ENCODE measurements at regions of chr12 and their contacts with region 1.

Region 1: DNA sequence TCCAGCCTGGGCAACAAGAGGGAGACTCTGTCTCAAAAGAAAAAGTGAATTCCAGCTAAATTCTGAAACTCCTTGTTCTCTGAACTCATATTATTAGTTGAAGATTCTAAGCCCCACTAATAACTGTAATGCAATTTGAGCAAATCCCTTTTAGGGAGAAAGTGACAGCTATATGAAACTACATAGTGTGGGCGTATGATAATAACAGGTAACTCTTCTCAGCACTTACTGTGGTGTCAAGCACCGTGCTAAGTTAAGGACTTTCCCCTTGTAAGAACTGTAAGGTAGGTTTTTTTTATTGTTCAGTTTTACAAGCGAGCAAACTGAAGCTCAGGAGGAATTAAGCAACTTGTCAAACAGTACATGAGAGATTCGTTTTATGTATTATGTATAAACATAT is 5.4 kb downstream of the ANKRD13A start:
- DNase-seq: no peak
- H3K4me3 Mint-ChIP-seq: no peak overlapping the region
- H3K27ac Mint-ChIP-seq: peak overlapping the region; percentile 38
- H3K4me1 Mint-ChIP-seq: peaks cover 78% of the 10 kb centered on the region
- H3K27me3 Mint-ChIP-seq: no peaks in the 10 kb centered on the region

Region 2: DNA sequence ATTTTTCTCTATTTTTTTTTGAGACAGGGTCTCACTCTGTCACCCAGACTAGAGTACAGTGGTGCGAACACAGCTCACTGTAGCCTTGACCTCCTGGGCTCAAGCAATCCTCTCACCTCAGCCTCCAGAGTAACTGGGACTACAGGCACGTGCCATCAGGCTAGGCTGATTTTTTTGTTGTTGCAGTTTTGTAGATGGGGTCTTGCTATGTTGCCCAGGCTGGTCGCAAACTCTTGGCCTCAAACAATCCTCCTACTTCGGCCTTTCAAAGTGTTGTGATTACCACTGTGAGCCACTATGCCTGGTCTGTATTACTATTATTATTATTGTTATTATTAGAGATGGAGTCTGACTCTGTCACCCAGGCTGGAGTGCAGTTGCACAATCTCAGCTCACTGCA is 31.8 kb before region 1 on chr12:
- CTCF ChIA-PET with region 1: no interaction called
- POLR2A ChIA-PET with region 1: interaction called, 3 read pairs
- intact Hi-C with region 1: loop called (anchors 5 kb)
- DNase-seq: no peak
- H3K4me3 Mint-ChIP-seq: no peak overlapping the region
- H3K27ac Mint-ChIP-seq: no peak overlapping the region
- H3K4me1 Mint-ChIP-seq: peaks cover 27% of the 10 kb centered on the region
- H3K27me3 Mint-ChIP-seq: no peaks in the 10 kb centered on the region

Region 3: DNA sequence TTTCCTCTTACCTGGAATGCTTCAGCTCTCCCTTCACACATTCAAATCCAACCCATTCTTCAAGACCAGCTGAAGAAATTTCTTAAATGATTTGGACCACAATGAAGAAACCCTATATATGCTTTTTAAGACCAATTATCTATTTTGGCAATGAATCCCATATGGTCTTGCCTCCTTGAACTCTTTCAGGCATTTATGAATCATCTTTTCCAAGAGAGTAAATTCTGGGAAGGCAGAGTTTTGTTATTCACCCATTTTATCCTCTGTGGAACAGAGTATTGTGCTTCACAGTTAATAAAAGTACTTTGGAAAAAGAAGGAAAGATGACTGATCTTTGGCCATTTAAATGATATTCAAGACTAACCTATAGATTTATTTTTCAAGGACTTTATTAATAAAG is 22.4 kb before region 1 on chr12:
- CTCF ChIA-PET with region 1: interaction called, 6 read pairs
- POLR2A ChIA-PET with region 1: interaction called, 3 read pairs
- intact Hi-C with region 1: loop called (anchors 1 kb)
- DNase-seq: no peak
- H3K4me3 Mint-ChIP-seq: no peak overlapping the region
- H3K27ac Mint-ChIP-seq: peak overlapping the region; percentile 78
- H3K4me1 Mint-ChIP-seq: peaks cover 60% of the 10 kb centered on the region
- H3K27me3 Mint-ChIP-seq: no peaks in the 10 kb centered on the region

Region 4: DNA sequence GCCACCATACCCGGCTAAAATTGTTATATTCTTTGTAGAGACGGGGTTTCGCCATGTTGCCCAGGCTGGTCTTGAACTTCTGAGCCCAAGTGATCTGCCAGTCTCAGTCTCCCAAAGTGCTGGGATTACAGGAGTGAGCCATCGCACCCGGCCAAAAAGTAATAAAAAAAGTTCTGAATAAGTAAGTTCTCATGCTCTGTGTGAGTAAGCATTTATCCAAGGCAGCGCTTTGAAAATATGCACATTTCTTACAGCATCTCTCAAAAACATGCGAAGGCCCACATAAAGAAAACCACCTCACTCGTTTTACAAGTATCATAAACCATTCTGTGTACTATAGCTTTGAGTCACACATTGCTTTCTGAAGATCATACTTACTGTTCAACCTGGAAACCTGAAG is 17.0 kb before region 1 on chr12:
- CTCF ChIA-PET with region 1: interaction called, 6 read pairs
- POLR2A ChIA-PET with region 1: interaction called, 3 read pairs
- intact Hi-C with region 1: loop called (anchors 1 kb)
- DNase-seq: peak; percentile 65
- H3K4me3 Mint-ChIP-seq: peak overlapping the region; percentile 20
- H3K27ac Mint-ChIP-seq: peak overlapping the region; percentile 88
- H3K4me1 Mint-ChIP-seq: peaks cover 60% of the 10 kb centered on the region
- H3K27me3 Mint-ChIP-seq: no peaks in the 10 kb centered on the region

Region 5: DNA sequence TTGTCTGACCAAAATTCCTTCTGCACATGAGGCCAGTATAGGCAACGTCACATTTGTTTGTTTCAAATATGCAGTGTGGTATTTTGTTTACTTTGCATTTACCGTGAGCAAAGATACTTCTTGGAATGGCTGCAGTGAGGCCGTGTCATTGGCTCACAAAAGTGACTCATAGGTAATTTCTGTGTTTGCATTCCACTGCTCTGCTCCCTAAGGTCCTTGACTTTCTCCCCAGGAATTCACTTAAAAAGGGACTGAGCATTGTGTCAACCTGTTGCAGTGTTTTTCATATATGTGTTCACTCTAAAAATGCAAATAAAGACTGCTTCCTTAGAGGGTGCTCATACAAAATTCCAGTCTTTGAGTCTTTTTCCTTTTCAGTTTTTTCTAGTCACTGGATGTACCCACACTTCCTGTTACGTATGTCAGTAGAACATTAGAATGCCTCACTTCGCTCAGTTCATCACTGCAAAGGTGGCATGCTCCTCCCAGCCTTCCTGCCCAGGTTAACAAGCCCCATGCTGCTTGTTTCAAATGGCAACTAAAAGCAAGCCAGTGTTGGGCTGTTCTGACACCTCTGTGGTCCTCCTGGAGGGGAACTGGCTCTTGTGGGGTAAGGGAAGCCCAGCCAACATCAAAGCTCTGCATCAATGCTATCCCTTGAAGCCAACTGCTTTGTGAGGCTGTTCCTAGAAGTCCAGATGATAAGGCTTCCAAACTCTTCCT is 34.6 kb after region 1 on chr12:
- CTCF ChIA-PET with region 1: interaction called, 3 read pairs
- POLR2A ChIA-PET with region 1: interaction called, 3 read pairs
- intact Hi-C with region 1: loop called (anchors 2 kb)
- DNase-seq: peak; percentile 68
- H3K4me3 Mint-ChIP-seq: no peak overlapping the region
- H3K27ac Mint-ChIP-seq: peak overlapping the region; percentile 96
- H3K4me1 Mint-ChIP-seq: peaks cover 47% of the 10 kb centered on the region
- H3K27me3 Mint-ChIP-seq: no peaks in the 10 kb centered on the region